ENCODE measurements at regions of chr21 and their contacts with region 1.

Region 1: GRCh38 chr21:36330904-36331303 is 10.9 kb downstream of the MORC3 start:
- H3K4me3 ChIP-seq: no peak overlapping the region
- H3K27ac ChIP-seq: no peak overlapping the region
- H3K4me1 ChIP-seq: peaks cover 6% of the 10 kb centered on the region; the same call in 1 of the 2 replicates
- CTCF ChIP-seq: no peak; the same call in 1 of the 2 replicates

Region 2: GRCh38 chr21:36141513-36141925 is 189.4 kb before region 1 on chr21:
- CTCF ChIA-PET with region 1: interaction called, 11 read pairs
- POLR2A ChIA-PET with region 1: no interaction called
- H3K4me3 ChIP-seq: no peak overlapping the region
- H3K27ac ChIP-seq: no peak overlapping the region
- H3K4me1 ChIP-seq: no peaks in the 10 kb centered on the region
- CTCF ChIP-seq: peak; percentile 95

Region 3: GRCh38 chr21:36310016-36310415 is 20.9 kb before region 1 on chr21:
- CTCF ChIA-PET with region 1: no interaction called
- POLR2A ChIA-PET with region 1: no interaction called
- H3K4me3 ChIP-seq: no peak overlapping the region
- H3K27ac ChIP-seq: no peak overlapping the region
- H3K4me1 ChIP-seq: no peaks in the 10 kb centered on the region
- CTCF ChIP-seq: no peak

Region 4: GRCh38 chr21:36661511-36662309 is 330.8 kb after region 1 on chr21:
- CTCF ChIA-PET with region 1: no interaction called
- POLR2A ChIA-PET with region 1: no interaction called
- H3K4me3 ChIP-seq: no peak overlapping the region
- H3K27ac ChIP-seq: no peak overlapping the region
- H3K4me1 ChIP-seq: no peaks in the 10 kb centered on the region
- CTCF ChIP-seq: peak; percentile 30; the same call in 1 of the 2 replicates